ENCODE measurements at regions of chr13 and their contacts with region 1.

Region 1: DNA sequence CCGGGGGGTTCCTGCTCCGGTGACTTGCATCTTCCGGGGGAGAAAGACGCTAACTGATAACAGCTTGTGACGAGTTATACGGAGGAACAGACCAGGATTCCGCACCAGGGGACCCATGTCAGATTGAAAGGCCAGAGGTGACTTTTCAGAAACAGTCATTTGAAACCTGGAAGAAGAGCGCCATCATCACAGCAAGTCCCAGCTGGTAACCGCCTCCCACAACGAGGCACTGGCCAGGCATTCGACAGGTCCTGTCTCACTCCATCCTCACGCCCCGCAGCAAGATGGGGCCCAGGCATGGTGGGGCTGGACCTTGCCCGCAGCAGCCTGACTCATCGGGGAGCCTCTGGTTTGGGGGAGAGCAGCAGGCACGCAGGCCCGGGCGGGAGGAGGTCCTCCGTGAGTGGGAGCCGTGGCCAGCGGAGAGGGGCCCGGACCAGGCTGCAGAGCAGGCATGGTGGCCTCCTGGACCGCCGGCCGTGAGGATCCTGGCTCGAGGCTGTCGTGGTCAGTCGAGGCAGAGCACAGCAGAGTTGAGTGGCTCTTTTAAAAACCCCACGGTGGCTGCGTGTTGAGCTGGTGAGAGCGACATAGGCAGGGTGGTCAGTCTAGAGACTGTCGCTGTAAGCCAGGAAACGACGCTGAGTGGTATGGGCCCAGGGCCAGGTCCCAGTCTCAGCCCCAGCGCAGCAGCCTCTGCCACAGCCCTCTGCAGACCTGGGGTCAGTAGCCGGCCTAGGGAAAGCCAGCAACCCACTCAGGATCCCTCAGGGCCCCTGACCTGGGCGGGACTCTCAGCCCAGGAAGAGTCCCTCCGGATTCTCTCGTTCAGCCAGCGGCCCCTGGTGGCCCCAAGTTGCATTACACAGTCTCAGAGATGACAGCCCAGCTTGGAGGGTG is 94.9 kb upstream of the MCF2L start:
- DNase-seq: peak; percentile 92
- ATAC-seq: peak; percentile 84

Region 2: DNA sequence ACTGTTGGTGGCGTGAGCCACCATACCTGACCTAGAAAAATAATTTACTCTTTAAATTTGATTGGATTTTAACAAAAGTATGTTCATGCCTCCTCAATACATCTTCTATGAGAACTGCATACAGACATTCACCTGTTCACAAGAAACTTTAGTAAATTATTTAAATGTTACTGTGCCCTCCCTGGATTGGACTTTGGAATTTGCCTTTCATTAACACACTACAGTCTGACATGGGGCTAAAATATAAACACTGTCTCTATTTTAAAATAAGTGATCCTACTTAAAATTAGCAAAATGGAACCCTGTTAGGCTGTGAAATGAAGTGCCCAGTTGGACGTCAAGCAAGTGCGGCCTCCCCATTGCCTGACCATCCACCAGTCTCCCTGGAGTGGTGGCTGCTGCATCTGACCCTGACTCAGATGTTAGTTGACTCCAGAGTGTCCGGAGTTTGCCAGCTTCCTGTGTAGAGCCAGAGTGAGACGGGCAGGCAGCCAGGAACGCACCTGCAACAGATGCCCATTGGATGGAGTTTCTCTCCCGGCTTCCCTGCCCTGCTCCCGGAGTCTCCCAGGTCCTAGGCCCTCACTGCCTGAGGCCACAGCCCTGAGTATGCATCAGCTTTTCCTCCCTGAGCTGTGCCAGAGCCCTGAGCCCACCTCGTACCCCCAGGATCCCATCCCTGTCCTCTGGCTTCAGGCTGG is 230.2 kb before region 1 on chr13:
- intact Hi-C with region 1: loop called (anchors 2 kb)
- DNase-seq: no peak
- ATAC-seq: no peak

Measured in Right ventricle myocardium inferior (tissue), 1 donor.